Panc1 (cell line): ENCODE measurements at regions of chr17 and their contacts with region 1.

Region 1: DNA sequence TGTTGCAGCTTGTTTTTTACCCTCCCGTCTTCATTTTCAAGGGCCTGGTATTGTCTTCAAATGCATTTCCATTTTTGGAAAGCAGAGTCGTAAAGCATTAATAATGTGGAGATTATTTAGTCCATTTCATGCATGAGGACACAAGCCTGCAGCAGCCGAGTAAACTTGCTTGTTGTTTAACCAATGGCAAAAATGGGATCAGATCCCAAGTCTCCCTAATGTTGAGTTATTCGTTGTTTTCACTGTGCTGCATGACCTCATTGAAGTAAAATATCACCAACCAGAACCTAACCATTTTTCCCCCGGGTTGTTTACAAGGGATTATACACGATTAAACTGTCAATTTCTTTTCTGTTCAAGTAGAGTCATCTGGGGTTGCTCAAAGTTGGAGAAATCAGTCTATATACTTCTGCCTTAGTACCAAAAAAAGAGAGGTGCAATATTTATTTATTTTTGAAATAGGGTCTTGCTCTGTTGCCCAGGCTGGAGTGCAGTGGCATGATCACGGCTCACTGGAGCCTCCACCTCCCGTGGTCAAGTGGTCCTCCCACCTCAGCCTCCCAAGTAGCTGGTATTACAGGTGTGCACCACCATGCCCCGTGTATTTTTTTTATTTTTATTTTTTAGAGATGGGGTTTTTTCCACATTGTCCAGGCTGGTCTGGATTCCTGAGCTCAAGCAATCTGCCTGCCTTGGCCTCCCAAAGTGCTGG is 12.4 kb downstream of the AMZ2 start:
- DNase-seq: no peak
- ATAC-seq: no peak
- H3K4me3 ChIP-seq: no peak overlapping the region
- H3K27ac ChIP-seq: no peak overlapping the region
- H3K4me1 ChIP-seq: no peaks in the 10 kb centered on the region; the same call in 1 of the 2 replicates
- H3K27me3 ChIP-seq: no peaks in the 10 kb centered on the region
- CTCF ChIP-seq: no peak

Region 2: GRCh38 chr17:68398691-68399637 is 138.8 kb after region 1 on chr17:
- CTCF ChIA-PET with region 1: interaction called, 7 read pairs
- POLR2A ChIA-PET with region 1: no interaction called
- in situ Hi-C with region 1: no loop called
- intact Hi-C with region 1: loop called (anchors 10 kb)
- DNase-seq: peak; percentile 32
- ATAC-seq: peak; percentile 89
- H3K4me3 ChIP-seq: no peak overlapping the region
- H3K27ac ChIP-seq: no peak overlapping the region
- H3K4me1 ChIP-seq: no peaks in the 10 kb centered on the region
- H3K27me3 ChIP-seq: no peaks in the 10 kb centered on the region
- CTCF ChIP-seq: peak; percentile 81

Region 3: DNA sequence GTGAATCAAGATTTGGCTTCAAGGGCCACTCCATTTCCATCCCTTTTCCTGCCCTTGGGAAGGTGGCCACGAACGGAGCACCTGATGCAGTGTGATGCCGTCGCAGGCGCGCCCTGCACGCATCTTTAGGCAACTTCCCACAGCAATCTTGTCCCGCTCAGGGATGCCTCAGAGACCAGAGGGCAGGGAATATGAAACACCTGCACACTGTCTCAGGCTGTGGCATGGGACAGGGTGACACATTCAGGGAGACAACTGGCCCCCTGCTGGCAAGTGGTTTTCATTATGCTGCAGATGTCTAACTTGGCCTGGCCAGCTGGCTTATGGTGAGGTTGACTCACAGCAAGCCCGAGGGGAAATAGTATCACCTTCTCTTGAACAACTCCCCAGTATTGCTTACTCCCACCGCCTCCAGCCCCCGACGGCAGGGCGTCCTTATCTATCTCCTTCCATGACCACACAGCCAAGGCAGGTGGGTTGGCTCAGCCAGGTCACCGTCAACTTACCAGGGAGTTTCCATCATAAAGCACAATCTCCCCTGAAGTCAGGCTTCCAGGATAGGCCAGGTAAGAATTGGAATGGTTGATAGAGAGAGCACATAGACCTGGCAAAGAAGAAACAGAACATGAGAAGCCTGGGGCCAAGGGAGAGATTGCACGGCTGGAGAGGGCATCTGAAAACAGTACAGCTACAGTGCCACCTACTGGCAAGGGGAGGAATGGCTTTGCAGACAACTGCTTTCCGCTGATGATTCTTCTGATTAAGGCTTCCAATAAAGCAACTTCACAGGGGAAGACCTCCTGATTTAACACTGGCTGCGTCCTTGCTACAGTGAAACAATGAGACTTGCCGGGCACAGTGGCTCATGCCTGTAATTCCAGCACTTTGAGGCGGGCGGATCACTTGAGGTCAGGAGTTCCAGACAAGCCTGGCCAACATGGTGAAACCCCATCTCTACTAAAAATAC is 176.0 kb after region 1 on chr17:
- CTCF ChIA-PET with region 1: interaction called, 5 read pairs
- POLR2A ChIA-PET with region 1: no interaction called
- in situ Hi-C with region 1: no loop called
- intact Hi-C with region 1: loop called (anchors 1 kb)
- DNase-seq: peak; percentile 71
- ATAC-seq: peak; percentile 85
- H3K4me3 ChIP-seq: no peak overlapping the region
- H3K27ac ChIP-seq: no peak overlapping the region
- H3K4me1 ChIP-seq: no peaks in the 10 kb centered on the region
- H3K27me3 ChIP-seq: no peaks in the 10 kb centered on the region
- CTCF ChIP-seq: peak; percentile 87